Activated CD4-positive, alpha-beta T cell treated with anti-CD3 and anti-CD28 coated beads for 36 hours (primary cell): ENCODE measurements at regions of chr20 and their contacts with region 1.

Region 1: GRCh38 chr20:32789896-32790750 is 27.9 kb downstream of the DNMT3B start:
- DNase-seq: peak; percentile 85
- ATAC-seq: peak; percentile 71
- H3K4me3 Mint-ChIP-seq: no peak overlapping the region
- H3K27ac Mint-ChIP-seq: no peak overlapping the region
- H3K4me1 Mint-ChIP-seq: peaks cover 32% of the 10 kb centered on the region
- H3K27me3 Mint-ChIP-seq: no peaks in the 10 kb centered on the region

Region 2: DNA sequence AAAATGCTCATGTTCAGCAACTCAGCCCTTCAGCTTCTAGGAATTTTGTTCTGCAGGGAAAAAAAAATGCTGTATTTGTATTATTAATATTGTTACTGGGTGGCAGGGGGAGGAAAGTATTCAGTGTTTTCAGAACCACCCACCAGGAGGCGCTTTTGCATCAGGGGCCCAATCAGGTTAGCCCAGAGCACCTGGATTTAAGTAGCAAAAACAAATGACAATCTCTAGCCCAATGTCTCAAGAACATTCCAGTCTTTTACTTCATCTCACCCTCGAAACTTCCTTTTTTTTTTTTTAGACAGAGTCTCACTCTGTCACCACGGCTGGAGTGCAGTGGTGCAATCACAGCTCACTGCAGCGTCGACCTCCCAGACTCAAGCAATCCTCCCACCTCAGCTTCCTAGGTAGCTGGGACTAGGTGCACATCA is 115.7 kb before region 1 on chr20:
- CTCF ChIA-PET with region 1: interaction called, 11 read pairs
- POLR2A ChIA-PET with region 1: no interaction called
- intact Hi-C with region 1: no loop called
- DNase-seq: peak; percentile 88
- ATAC-seq: peak; percentile 73
- H3K4me3 Mint-ChIP-seq: no peak overlapping the region
- H3K27ac Mint-ChIP-seq: no peak overlapping the region
- H3K4me1 Mint-ChIP-seq: peaks cover 14% of the 10 kb centered on the region
- H3K27me3 Mint-ChIP-seq: no peaks in the 10 kb centered on the region

Region 3: DNA sequence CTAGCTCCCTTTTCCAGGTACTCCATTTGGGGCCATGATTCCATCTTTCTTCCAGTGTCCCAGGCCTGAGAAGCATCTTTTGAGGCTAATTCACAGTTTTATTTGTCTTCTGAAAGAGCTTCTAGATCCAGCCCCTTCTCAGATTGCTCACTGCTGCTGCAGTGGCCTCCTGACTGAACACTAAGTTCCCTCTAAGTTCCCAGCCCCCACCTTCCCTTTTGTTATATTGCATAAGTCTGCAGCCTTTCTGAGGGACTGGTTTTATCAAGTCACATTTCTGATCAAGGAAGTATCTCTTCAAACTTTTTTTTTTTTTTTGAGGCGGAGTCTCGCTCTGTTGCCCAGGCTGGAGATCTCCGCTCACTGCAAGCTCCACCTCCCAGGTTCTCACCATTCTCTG is 40.3 kb after region 1 on chr20:
- CTCF ChIA-PET with region 1: interaction called, 4 read pairs
- POLR2A ChIA-PET with region 1: no interaction called
- intact Hi-C with region 1: loop called in 1 of 2 experiments (anchors 5 kb)
- DNase-seq: no peak
- ATAC-seq: peak; percentile 27
- H3K4me3 Mint-ChIP-seq: no peak overlapping the region
- H3K27ac Mint-ChIP-seq: peak overlapping the region; percentile 26
- H3K4me1 Mint-ChIP-seq: peaks cover 56% of the 10 kb centered on the region
- H3K27me3 Mint-ChIP-seq: no peaks in the 10 kb centered on the region

Region 4: GRCh38 chr20:32894026-32894483 is 103.9 kb after region 1 on chr20:
- CTCF ChIA-PET with region 1: interaction called, 4 read pairs
- POLR2A ChIA-PET with region 1: no interaction called
- intact Hi-C with region 1: loop called in 1 of 2 experiments (anchors 1 kb)
- DNase-seq: peak; percentile 56
- ATAC-seq: no peak
- H3K4me3 Mint-ChIP-seq: no peak overlapping the region
- H3K27ac Mint-ChIP-seq: no peak overlapping the region
- H3K4me1 Mint-ChIP-seq: no peaks in the 10 kb centered on the region
- H3K27me3 Mint-ChIP-seq: no peaks in the 10 kb centered on the region

Region 5: DNA sequence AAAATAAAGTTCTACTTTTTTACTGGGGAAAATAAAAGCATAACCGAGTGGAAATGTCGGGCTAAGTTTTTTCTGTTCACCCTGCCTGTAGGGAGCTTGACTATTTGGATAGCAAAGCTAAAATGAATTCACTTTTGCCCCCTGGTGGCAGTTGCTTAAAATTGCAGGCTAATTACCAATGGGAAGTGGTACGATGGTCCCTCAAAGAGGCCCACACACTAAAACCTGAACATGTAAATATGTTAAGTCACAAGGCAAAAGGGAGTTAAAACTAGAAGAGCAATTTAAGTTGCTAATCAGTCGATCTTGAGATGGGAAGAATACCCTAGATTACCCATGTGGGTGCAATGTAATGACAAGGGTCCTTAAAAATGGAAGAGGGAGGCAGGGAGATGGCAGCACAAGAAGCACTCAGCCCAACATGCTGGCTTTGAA is 215.0 kb after region 1 on chr20:
- CTCF ChIA-PET with region 1: interaction called, 5 read pairs
- POLR2A ChIA-PET with region 1: no interaction called
- intact Hi-C with region 1: loop called in 1 of 2 experiments (anchors 2 kb)
- DNase-seq: peak; percentile 59
- ATAC-seq: peak; percentile 78
- H3K4me3 Mint-ChIP-seq: no peak overlapping the region
- H3K27ac Mint-ChIP-seq: no peak overlapping the region
- H3K4me1 Mint-ChIP-seq: peaks cover 14% of the 10 kb centered on the region
- H3K27me3 Mint-ChIP-seq: no peaks in the 10 kb centered on the region

Region 6: GRCh38 chr20:33097001-33097400 is 306.9 kb after region 1 on chr20:
- CTCF ChIA-PET with region 1: interaction called, 4 read pairs
- POLR2A ChIA-PET with region 1: no interaction called
- intact Hi-C with region 1: loop called (anchors 1 to 5 kb)
- DNase-seq: no peak
- ATAC-seq: no peak
- H3K4me3 Mint-ChIP-seq: no peak overlapping the region
- H3K27ac Mint-ChIP-seq: no peak overlapping the region
- H3K4me1 Mint-ChIP-seq: peaks cover 2% of the 10 kb centered on the region
- H3K27me3 Mint-ChIP-seq: no peaks in the 10 kb centered on the region

Region 7: GRCh38 chr20:33299111-33299603 is 509.0 kb after region 1 on chr20:
- CTCF ChIA-PET with region 1: interaction called, 3 read pairs
- POLR2A ChIA-PET with region 1: no interaction called
- intact Hi-C with region 1: loop called in 1 of 2 experiments (anchors 2 kb)
- DNase-seq: peak; percentile 84
- ATAC-seq: peak; percentile 90
- H3K4me3 Mint-ChIP-seq: no peak overlapping the region
- H3K27ac Mint-ChIP-seq: no peak overlapping the region
- H3K4me1 Mint-ChIP-seq: no peaks in the 10 kb centered on the region
- H3K27me3 Mint-ChIP-seq: peaks cover 6% of the 10 kb centered on the region